Caco-2 (cell line): ENCODE measurements at regions of chr19 and their contacts with region 1.

Region 1: DNA sequence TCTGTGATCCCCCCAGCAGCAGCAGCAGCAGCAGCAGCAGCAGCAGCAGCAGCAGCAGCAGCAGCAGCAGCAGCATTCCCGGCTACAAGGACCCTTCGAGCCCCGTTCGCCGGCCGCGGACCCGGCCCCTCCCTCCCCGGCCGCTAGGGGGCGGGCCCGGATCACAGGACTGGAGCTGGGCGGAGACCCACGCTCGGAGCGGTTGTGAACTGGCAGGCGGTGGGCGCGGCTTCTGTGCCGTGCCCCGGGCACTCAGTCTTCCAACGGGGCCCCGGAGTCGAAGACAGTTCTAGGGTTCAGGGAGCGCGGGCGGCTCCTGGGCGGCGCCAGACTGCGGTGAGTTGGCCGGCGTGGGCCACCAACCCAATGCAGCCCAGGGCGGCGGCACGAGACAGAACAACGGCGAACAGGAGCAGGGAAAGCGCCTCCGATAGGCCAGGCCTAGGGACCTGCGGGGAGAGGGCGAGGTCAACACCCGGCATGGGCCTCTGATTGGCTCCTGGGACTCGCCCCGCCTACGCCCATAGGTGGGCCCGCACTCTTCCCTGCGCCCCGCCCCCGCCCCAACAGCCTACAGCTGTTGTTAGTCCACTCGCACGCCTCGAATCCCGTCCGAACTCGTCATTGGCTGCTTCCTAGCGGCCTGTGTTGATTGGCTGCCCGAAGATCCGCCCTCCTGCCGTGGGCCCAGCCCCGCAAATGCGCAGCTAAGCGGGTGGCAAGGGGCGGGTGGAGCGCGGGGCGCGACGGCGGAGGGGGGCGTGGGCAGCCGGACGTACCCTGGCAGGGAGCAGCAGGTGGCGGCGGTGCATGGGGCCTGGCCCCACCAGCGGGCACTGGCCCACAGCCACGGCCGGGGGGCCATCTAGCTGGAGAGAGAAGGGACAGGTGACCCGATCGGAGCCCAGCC is 1.4 kb upstream of the SIX5 start:
- DNase-seq: peak; percentile 99
- H3K4me3 ChIP-seq: peak overlapping the region; percentile 76
- H3K4me3 Mint-ChIP-seq: peak overlapping the region; percentile 97
- H3K27ac Mint-ChIP-seq: peak overlapping the region; percentile 96
- H3K4me1 ChIP-seq: peaks cover 6% of the 10 kb centered on the region
- H3K4me1 Mint-ChIP-seq: peaks cover 7% of the 10 kb centered on the region
- H3K27me3 ChIP-seq: no peaks in the 10 kb centered on the region
- H3K27me3 Mint-ChIP-seq: no peaks in the 10 kb centered on the region
- CTCF ChIP-seq: peak; percentile 95 to 98

Region 2: GRCh38 chr19:45681391-45682015 is 88.9 kb before region 1 on chr19:
- CTCF ChIA-PET with region 1: interaction called, 18 read pairs
- POLR2A ChIA-PET with region 1: interaction called, 24 read pairs
- intact Hi-C with region 1: no loop called
- DNase-seq: peak; percentile 88 to 93
- H3K4me3 ChIP-seq: peak overlapping the region; percentile 40
- H3K4me3 Mint-ChIP-seq: peak overlapping the region; percentile 76
- H3K27ac Mint-ChIP-seq: peak overlapping the region; percentile 81
- H3K4me1 ChIP-seq: peaks cover 15% of the 10 kb centered on the region
- H3K4me1 Mint-ChIP-seq: peaks cover 12% of the 10 kb centered on the region
- H3K27me3 ChIP-seq: no peaks in the 10 kb centered on the region
- H3K27me3 Mint-ChIP-seq: no peaks in the 10 kb centered on the region
- CTCF ChIP-seq: peak; percentile 96 to 97

Region 3: GRCh38 chr19:45717166-45717982 is 53.1 kb before region 1 on chr19:
- CTCF ChIA-PET with region 1: interaction called, 44 read pairs
- POLR2A ChIA-PET with region 1: interaction called, 64 read pairs
- intact Hi-C with region 1: loop called (anchors 1 kb)
- DNase-seq: peak; percentile 99 to 100
- H3K4me3 ChIP-seq: peak overlapping the region; percentile 64
- H3K4me3 Mint-ChIP-seq: peak overlapping the region; percentile 95
- H3K27ac Mint-ChIP-seq: peak overlapping the region; percentile 96
- H3K4me1 ChIP-seq: peaks cover 14% of the 10 kb centered on the region
- H3K4me1 Mint-ChIP-seq: peaks cover 19% of the 10 kb centered on the region
- H3K27me3 ChIP-seq: no peaks in the 10 kb centered on the region
- H3K27me3 Mint-ChIP-seq: no peaks in the 10 kb centered on the region
- CTCF ChIP-seq: peak in 1 of 2 experiments; percentile 26

Region 4: DNA sequence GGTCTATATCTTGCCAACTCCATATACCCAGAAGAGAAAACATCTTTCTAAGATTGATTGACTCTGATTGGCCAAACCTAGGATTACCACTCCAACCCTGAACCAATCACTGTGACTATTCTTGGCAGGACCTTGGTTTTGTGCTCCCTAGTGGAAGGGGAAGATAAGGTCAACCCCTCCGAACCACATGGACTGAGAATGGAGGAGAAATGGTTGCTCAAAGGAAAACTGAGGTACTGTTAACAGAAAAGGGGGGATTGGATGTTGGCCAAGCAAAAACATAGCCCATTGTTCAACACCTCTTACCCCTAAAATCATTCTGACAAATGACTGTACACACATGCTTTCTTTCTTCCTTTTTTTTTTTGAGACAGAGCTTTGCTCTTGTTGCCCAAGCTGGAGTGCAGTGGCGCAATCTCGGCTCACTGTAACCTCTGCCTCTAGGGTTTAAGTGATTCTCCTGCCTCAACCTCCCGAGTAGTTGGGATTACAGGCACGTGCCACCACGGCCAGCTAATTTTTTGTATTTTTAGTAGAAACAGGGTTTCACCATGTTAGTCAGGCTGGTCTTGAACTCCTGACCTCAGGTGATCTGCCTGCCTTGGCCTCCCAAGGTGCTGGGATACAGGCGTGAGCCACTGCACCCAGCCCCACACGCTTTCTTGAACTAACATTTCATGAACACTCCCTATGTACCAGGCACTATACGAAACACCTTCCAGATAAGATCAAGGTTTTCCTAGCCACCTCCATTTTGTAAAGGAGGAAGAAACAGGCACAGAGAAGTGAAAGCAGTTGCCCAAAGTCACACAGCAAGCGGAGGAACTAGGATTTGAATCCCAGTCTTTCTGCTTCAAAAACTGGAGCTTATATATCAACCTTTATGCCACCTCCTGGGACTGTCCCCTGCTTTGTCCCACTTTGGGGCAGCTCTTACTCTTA is 30.7 kb before region 1 on chr19:
- CTCF ChIA-PET with region 1: interaction called, 4 read pairs
- POLR2A ChIA-PET with region 1: no interaction called
- intact Hi-C with region 1: loop called (anchors 1 kb)
- DNase-seq: no peak
- H3K4me3 ChIP-seq: no peak overlapping the region
- H3K4me3 Mint-ChIP-seq: no peak overlapping the region
- H3K27ac Mint-ChIP-seq: no peak overlapping the region
- H3K4me1 ChIP-seq: peaks cover 19% of the 10 kb centered on the region
- H3K4me1 Mint-ChIP-seq: peaks cover 7% of the 10 kb centered on the region
- H3K27me3 ChIP-seq: no peaks in the 10 kb centered on the region
- H3K27me3 Mint-ChIP-seq: no peaks in the 10 kb centered on the region
- CTCF ChIP-seq: no peak

Region 5: DNA sequence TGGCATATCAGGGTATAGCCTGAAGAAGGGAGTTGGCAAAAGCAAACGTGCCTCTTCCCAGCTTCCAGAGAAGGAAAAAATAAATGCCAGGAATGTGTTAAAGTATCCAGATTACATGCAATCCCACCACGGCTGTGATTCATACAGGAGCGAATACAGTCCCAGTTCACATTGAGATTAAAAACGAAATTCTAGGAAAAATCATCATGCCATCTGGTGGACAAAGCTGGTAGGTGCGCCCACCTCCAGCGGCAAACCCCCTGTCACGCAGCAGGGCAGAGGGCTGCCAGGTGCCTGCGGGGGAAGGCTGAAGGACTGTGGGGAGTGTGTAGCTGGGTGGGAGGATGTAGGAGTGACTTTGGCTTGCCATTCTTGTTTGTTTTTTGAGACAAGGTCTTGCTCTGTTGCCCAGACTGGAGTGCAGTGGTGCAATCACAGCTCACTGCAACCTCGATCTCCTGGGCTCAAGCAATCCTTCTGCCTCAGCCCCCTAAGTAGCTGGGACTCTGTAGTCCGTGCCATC is 28.6 kb after region 1 on chr19:
- CTCF ChIA-PET with region 1: interaction called, 82 read pairs
- POLR2A ChIA-PET with region 1: interaction called, 8 read pairs
- intact Hi-C with region 1: loop called (anchors 1 kb)
- DNase-seq: peak in 1 of 2 experiments; percentile 79
- H3K4me3 ChIP-seq: no peak overlapping the region
- H3K4me3 Mint-ChIP-seq: peak overlapping the region; percentile 4
- H3K27ac Mint-ChIP-seq: no peak overlapping the region
- H3K4me1 ChIP-seq: no peaks in the 10 kb centered on the region
- H3K4me1 Mint-ChIP-seq: peaks cover 6% of the 10 kb centered on the region
- H3K27me3 ChIP-seq: no peaks in the 10 kb centered on the region
- H3K27me3 Mint-ChIP-seq: no peaks in the 10 kb centered on the region
- CTCF ChIP-seq: peak; percentile 76 to 85

Region 6: GRCh38 chr19:45886427-45887199 is 116.2 kb after region 1 on chr19:
- CTCF ChIA-PET with region 1: interaction called, 6 read pairs
- POLR2A ChIA-PET with region 1: interaction called, 5 read pairs
- intact Hi-C with region 1: loop called (anchors 5 kb)
- DNase-seq: peak; percentile 93 to 94
- H3K4me3 ChIP-seq: peak overlapping the region; percentile 84
- H3K4me3 Mint-ChIP-seq: peak overlapping the region; percentile 93
- H3K27ac Mint-ChIP-seq: peak overlapping the region; percentile 95
- H3K4me1 ChIP-seq: peaks cover 13% of the 10 kb centered on the region
- H3K4me1 Mint-ChIP-seq: peaks cover 12% of the 10 kb centered on the region
- H3K27me3 ChIP-seq: no peaks in the 10 kb centered on the region
- H3K27me3 Mint-ChIP-seq: no peaks in the 10 kb centered on the region
- CTCF ChIP-seq: no peak